GM10248 (cell line): ENCODE measurements at regions of chr17 and their contacts with region 1.

Region 1: DNA sequence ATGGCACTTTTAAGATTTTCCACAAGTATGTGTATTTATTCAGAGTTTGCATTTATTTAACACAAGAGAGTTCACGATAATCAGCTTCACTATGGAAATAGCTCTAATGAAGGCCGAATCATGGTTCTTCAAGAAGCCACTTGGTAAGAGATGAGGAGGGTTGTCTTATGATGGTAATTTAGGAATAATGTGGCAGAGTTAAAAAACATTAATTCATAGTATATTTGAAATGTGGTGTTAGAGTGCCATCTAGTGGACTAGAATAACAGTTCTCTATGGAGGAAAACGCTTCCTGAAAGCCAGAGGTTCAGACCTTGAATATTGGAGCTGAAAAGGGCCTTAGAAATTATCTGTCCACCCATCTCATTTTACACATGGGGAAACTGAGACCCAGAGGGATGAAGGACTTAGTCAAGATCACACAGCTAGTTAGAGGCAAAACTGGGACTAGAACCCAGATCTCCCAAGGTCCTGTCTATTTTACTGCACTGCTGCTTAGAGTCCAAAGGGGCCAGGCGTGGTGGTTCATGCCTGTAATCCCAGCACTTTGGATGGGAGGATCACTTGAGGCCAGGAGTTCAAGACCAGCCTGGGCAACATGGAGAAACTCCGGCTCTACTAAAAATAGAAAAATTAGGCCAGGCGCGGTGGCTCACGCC is 33.8 kb upstream of the KPNB1 start:
- DNase-seq: peak; percentile 58
- CTCF ChIP-seq: peak; percentile 38

Region 2: GRCh38 chr17:47363171-47363570 is 252.7 kb before region 1 on chr17:
- CTCF ChIA-PET with region 1: interaction called, 23 read pairs
- POLR2A ChIA-PET with region 1: no interaction called
- DNase-seq: no peak
- CTCF ChIP-seq: no peak

Region 3: GRCh38 chr17:47604598-47604927 is 11.3 kb before region 1 on chr17:
- CTCF ChIA-PET with region 1: interaction called, 52 read pairs
- POLR2A ChIA-PET with region 1: no interaction called
- DNase-seq: no peak
- CTCF ChIP-seq: no peak

Region 4: DNA sequence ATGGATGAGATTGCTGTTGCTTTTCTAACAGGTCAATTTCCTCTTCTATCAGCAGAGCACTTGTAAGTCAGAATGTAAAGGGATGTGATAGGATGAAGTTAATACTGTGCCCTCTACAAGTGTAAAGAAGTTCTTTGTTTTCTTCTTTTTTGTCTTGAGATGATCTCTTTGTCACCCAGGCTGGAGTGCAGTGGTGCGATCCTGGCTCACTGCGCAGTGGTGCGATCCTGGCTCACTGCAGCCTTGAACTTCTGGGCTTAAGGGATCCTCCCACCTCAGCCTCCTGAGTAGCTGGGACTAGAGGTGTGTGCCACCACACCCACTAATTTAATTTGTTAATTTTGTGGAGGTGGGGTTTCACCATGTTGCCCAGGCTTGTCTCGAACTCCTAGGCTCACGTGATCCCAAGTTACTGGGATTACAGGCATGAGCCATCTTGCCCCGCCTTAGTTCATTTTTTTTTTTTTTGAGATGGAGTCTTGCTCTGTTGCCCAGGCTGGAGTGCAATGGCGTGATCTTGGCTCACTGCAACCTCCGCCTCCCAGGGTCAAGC is 12.2 kb after region 1 on chr17:
- CTCF ChIA-PET with region 1: interaction called, 20 read pairs
- POLR2A ChIA-PET with region 1: no interaction called
- DNase-seq: no peak
- CTCF ChIP-seq: no peak

Region 5: DNA sequence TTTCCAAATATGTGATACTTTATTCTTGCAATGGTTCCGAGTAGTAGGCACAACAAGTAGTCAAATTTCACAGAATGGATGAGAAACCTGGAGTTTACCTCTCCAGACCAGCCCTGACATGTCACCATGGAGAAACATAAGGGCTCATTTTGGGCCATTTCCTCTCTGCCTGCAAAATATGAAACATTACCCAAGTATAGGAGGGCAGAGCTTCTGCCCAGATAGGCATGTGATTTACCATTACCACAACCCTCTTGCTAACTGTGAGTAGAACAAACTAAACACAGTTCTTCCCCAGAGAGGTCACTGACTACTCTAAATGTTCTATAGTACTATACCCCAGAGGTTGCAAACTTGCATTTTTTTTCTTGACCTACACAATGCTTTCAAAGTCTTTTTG is 18.1 kb after region 1 on chr17:
- CTCF ChIA-PET with region 1: interaction called, 20 read pairs
- POLR2A ChIA-PET with region 1: no interaction called
- DNase-seq: no peak
- CTCF ChIP-seq: no peak

Region 6: DNA sequence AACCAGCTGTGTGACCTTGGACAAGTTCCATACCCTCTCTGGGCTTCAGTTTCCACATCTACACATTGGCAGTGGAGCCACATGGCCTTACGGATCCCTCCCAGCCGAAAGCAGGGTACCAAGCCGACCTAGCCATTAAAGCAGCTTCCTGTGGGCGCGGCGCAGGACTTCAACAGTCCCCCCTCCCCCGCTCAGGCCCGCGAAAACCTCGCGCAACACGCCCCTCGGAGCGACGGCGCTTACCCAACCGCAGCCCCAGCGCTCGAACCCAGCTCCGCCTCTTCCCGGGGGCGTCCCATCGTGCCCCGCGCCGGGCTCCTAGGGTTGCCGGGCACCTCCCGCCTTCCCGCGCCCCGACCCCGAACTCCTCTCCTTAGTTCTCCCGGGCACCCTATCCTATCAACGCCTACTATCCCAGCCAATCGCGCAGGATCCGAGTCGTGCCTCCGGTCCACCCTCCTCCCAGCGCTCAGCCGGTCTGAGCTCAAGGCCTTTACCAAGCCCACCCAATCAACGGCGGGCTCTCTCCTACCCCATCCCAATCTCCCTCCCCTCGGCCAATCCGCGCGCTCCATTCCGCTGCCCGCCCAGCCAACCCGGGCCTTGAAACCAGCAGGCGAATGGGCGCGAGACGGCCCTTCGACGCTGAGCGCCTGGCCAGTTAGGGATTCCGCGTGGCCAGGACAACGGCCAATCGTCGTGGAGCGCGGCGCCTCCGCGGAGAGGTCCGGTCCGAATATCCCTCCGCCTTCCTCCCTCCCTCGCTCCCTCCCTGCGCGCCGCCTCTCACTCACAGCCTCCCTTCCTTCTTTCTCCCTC is 33.5 kb after region 1 on chr17 and contains the start of gene KPNB1:
- CTCF ChIA-PET with region 1: interaction called, 28 read pairs
- POLR2A ChIA-PET with region 1: interaction called, 5 read pairs
- DNase-seq: peak; percentile 93
- CTCF ChIP-seq: no peak

Region 7: DNA sequence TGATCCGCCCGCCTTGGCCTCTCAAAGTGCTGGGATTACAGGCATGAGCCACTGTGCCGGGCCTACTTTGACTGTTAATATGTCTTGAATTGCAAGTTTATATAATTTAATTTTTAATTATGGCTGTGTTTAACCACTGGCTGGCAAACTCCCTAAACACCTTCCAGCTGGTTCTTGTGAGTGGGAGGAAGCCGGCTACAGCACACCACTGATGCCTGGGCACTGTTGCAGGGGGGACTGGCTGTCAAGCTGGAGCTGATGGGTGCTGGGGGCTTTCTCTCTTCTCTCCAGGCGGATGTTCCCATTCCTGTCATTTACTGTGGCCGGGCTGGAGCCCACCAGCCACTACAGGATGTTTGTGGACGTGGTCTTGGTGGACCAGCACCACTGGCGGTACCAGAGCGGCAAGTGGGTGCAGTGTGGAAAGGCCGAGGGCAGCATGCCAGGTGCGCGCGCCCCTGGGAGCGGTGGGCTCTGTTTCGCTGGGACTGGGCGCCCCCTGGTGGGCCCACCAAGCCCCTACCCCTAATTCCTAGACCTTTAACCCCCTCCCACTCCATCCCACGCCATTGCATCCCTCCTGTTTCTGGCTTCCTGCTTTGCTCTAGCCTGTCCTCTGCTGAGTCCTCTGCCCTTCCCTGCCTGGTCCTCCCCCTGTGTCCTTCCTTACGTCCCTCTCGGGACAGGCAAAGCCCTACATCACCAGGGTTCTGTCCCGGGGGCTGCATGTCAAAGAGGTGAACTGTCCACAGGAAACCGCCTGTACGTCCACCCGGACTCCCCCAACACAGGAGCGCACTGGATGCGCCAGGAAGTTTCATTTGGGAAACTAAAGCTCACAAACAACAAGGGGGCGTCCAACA is 126.7 kb after region 1 on chr17:
- CTCF ChIA-PET with region 1: no interaction called
- POLR2A ChIA-PET with region 1: no interaction called
- DNase-seq: peak; percentile 57
- CTCF ChIP-seq: peak; percentile 33